ENCODE measurements at regions of chr11 and their contacts with region 1.

Region 1: DNA sequence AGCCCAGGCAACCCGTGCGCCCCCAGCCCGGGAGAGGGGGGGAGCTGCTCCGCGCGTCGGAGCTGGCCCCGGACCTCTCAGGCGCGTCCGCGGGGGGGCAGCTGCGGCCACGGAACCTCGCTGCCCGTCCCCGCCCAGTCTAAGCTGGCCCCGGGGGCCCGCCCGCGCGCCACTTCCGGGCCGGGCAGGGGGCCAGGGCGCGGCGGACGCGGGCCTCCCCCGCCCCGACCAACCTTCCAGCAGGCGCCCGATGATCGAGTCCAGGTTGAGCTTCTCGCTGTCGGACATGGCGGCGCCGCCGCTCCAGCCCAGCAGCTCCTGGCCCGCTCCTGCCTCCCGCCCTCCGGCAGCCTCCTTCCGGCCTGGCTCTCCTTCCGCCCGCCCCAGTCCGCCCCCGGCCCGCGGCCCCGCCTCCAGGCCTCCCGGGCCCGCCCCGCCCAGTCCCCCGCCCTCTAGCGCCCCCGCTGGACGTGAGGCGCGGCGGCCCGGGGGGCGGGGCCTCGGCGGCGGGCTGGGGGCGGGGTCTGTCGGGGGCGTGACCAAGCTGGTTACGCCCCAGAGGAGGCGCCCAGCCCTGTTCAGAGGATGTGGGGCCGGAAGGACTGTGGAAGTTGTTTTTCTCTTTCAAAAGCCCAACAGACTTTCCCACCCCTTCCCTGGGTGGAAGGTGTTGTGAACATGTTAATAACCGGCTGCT is at the start of gene PPP1CA:
- DNase-seq: peak; percentile 90 to 99 (median 98)
- ATAC-seq: peak; percentile 89
- H3K4me3 ChIP-seq: peak within 1 kb of the TSS; percentile 91
- H3K27ac ChIP-seq: peak within 1 kb of the TSS; percentile 97
- H3K4me1 ChIP-seq: peaks cover 26 to 88% of the 10 kb centered on the region in 2 experiments
- H3K27me3 ChIP-seq: no peaks in the 10 kb centered on the region
- CTCF ChIP-seq: peak; percentile 37 to 69 (median 52); a peak in 5 of 6 replicates
- EP300 ChIP-seq: no peak
- POLR2A ChIP-seq: peak; percentile 84; the same call in 1 of the 2 replicates
- RAD21 ChIP-seq: peak; percentile 66 to 78
- polyA plus RNA-seq, gene PPP1CA: 18.2 to 51.4 TPM

Region 2: DNA sequence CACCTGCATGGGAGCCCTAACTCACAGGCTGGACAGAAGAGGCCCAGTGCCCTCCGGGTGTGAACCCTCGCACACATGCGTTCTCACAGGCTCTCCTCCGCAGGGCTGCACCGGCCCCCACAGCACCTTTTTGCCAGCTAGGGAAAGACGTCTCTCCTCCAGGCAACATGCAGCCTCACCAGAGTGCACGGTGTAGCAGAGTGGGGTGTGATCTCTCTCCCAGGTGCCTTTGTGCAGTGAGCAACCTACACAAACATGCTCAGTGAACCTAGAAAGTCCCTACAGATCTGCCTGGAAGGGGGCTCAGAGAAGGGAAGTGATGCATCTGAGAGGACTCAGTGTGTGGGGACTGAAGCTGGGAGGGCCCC is 10.1 kb after region 1 on chr11:
- CTCF ChIA-PET with region 1: interaction called, 3 read pairs
- POLR2A ChIA-PET with region 1: interaction called, 19 read pairs
- in situ Hi-C with region 1: no loop called
- intact Hi-C with region 1: no loop called
- DNase-seq: peak in 2 of 4 experiments; percentile 39 to 51
- ATAC-seq: peak; percentile 34
- H3K4me3 ChIP-seq: no peak overlapping the region
- H3K27ac ChIP-seq: no peak overlapping the region
- H3K4me1 ChIP-seq: peaks cover 21 to 64% of the 10 kb centered on the region in 2 experiments
- H3K27me3 ChIP-seq: no peaks in the 10 kb centered on the region
- CTCF ChIP-seq: no peak
- EP300 ChIP-seq: no peak
- POLR2A ChIP-seq: no peak
- RAD21 ChIP-seq: no peak

Region 3: DNA sequence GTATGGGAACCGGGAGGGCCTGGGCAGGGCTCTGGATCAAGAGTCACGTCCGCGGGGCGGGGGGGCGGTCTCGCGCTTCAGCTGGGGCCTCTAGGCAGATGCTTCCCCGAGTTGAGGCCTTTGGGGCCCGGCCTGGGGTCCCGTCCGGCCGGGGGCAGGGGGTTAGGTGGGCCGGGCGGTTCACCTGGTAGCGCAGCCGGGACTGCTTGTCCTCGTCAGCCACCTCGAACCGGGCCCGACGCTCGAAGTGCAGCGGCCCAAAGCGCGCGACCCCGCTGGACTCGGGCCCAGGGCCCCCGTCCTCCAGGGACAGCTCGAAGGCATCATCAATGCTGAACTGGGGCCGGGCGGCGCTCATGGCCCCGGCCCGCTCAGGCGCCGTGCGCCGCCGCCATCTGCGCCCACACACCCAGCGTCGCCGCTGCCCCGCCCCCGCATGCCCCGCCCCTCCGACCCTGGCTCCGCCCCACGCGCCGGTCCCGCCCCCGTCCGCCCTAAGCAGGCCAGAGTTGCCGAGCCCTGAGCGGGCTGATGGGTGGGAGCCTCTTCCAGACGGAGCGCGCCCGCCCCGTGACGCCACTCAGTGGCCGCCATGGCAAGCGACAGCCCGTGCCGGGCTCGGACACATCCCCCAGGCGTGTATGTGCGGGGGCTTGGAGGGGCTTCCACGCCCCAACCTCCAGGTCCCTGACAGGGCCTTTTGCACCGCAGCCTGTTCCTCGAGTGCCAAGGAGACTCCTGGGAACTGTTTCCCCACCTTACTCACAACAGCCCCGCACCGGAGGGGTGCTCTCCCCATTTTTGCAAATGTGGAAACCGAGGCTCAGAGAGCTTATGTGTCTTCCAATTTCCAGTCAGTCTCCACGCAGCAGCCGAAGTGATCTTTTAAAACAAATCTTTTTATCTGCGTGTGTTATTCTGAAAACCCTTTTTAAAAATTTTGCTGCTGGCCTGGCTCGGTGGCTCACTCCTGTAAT is 67.5 kb after region 1 on chr11 and contains the start of gene TMEM134:
- CTCF ChIA-PET with region 1: interaction called, 3 read pairs
- POLR2A ChIA-PET with region 1: interaction called, 3 read pairs
- in situ Hi-C with region 1: no loop called
- intact Hi-C with region 1: loop called (anchors 1 kb)
- DNase-seq: peak; percentile 92 to 96 (median 94)
- ATAC-seq: peak; percentile 87
- H3K4me3 ChIP-seq: peak within 1 kb of the TSS; percentile 76
- H3K27ac ChIP-seq: peak within 1 kb of the TSS; percentile 72
- H3K4me1 ChIP-seq: peaks cover 9 to 41% of the 10 kb centered on the region in 2 experiments; a peak in 4 of 5 replicates
- H3K27me3 ChIP-seq: no peaks in the 10 kb centered on the region
- CTCF ChIP-seq: peak; percentile 60 to 84 (median 75)
- EP300 ChIP-seq: no peak
- POLR2A ChIP-seq: peak; percentile 82
- RAD21 ChIP-seq: peak; percentile 54 to 76
- polyA plus RNA-seq, gene TMEM134: 0.63 to 1.4 TPM

Region 4: DNA sequence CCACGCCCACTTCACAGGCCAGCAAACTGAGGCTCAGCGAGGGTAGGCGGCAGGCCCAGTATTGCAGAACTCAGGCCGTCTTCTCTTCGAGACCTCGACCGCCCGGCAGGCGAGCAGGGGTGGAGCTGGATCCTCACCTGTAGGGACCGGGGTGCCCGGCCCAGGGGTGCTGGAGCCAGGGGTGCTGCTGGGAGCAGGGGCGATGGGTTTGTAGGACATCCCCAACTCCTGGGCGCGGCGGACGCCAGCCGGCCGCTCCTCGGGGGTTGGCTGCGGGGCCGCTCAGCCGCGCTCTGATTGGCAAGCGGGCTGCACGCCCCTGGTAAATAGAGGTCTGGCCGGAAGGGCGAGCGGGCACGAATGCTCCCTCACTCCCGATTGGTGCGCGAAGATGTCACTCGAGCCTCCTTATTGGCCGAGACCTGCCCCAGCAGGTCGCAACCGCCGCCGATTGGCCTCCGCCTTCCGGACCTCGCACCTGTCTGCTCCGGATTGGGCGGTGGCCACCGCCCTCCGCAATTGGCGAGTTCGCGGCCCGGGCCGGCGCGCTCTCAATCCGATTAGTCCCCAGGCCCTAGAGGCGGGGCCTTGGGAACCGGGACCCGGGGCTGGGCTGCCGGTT is 106.3 kb after region 1 on chr11 and contains the start of gene CDK2AP2:
- CTCF ChIA-PET with region 1: interaction called, 13 read pairs
- POLR2A ChIA-PET with region 1: interaction called, 4 read pairs
- in situ Hi-C with region 1: no loop called
- intact Hi-C with region 1: loop called (anchors 2 kb)
- DNase-seq: peak; percentile 97 to 100 (median 98)
- ATAC-seq: peak; percentile 91
- H3K4me3 ChIP-seq: peak within 1 kb of the TSS; percentile 79
- H3K27ac ChIP-seq: peak within 1 kb of the TSS; percentile 92
- H3K4me1 ChIP-seq: peaks cover 28 to 60% of the 10 kb centered on the region in 2 experiments
- H3K27me3 ChIP-seq: no peaks in the 10 kb centered on the region
- CTCF ChIP-seq: 0 out of 6 replicates have a peak, but pooled peaks of 1 of the 3 experiments have one; percentile 1
- EP300 ChIP-seq: no peak
- POLR2A ChIP-seq: peak; percentile 65; the same call in 1 of the 2 replicates
- RAD21 ChIP-seq: no peak
- polyA plus RNA-seq, gene CDK2AP2: 4.4 to 8.4 TPM

Measured in K562 (cell line).